ENCODE measurements at regions of chr7 and their contacts with region 1.

Region 1: GRCh38 chr7:99438573-99439480 is at the starts of genes CPSF4 and PTCD1:
- DNase-seq: peak; percentile 72 to 91 (median 80)
- ATAC-seq: peak; percentile 83 to 89
- H3K4me3 Mint-ChIP-seq: peak within 1 kb of the TSS; percentile 90 to 99 (median 96)
- H3K27ac Mint-ChIP-seq: peak within 1 kb of the TSS; percentile 91 to 98 (median 96)
- H3K4me1 Mint-ChIP-seq: peaks cover 22 to 50% (median 43%) of the 10 kb centered on the region in 4 donors
- H3K27me3 Mint-ChIP-seq: no peaks in the 10 kb centered on the region
- polyA plus RNA-seq, gene CPSF4: 22.9 to 31.3 (median 28.1) TPM
- polyA plus RNA-seq, gene PTCD1: 2.0 to 3.9 (median 3.2) TPM

Region 2: GRCh38 chr7:99408379-99409191 is 30.2 kb before region 1 on chr7 and contains the starts of genes BUD31 and PDAP1:
- POLR2A ChIA-PET with region 1: interaction called, 24 read pairs
- DNase-seq: peak; percentile 79 to 100 (median 96)
- ATAC-seq: peak; percentile 82 to 84
- H3K4me3 Mint-ChIP-seq: peak within 1 kb of the TSS; percentile 91 to 100 (median 96)
- H3K27ac Mint-ChIP-seq: peak within 1 kb of the TSS; percentile 94 to 99 (median 98)
- H3K4me1 Mint-ChIP-seq: peaks cover 33 to 74% (median 55%) of the 10 kb centered on the region in 4 donors
- H3K27me3 Mint-ChIP-seq: no peaks in the 10 kb centered on the region
- polyA plus RNA-seq, gene BUD31: 151 to 216 (median 170) TPM
- polyA plus RNA-seq, gene PDAP1: 24.0 to 35.6 (median 33.4) TPM

Region 3: GRCh38 chr7:99465421-99465768 is 26.6 kb after region 1 on chr7:
- POLR2A ChIA-PET with region 1: interaction called, 14 read pairs
- DNase-seq: no peak
- ATAC-seq: peak; percentile 1 to 7
- H3K4me3 Mint-ChIP-seq: peak overlapping the region; percentile 88 to 98 (median 96)
- H3K27ac Mint-ChIP-seq: peak overlapping the region; percentile 83 to 98 (median 96)
- H3K4me1 Mint-ChIP-seq: peaks cover 17 to 50% (median 32%) of the 10 kb centered on the region in 4 donors
- H3K27me3 Mint-ChIP-seq: no peaks in the 10 kb centered on the region

Measured in naive thymus-derived CD8-positive, alpha-beta T cell (primary cell).